Left colon (tissue), 2 donors: ENCODE measurements at regions of chr20 and their contacts with region 1.

Region 1: GRCh38 chr20:44187051-44187762 is at the start of gene JPH2:
- DNase-seq: peak; percentile 43 to 70
- ATAC-seq: peak; percentile 70
- total RNA-seq, gene JPH2: 0.92 to 12.9 TPM

Region 2: DNA sequence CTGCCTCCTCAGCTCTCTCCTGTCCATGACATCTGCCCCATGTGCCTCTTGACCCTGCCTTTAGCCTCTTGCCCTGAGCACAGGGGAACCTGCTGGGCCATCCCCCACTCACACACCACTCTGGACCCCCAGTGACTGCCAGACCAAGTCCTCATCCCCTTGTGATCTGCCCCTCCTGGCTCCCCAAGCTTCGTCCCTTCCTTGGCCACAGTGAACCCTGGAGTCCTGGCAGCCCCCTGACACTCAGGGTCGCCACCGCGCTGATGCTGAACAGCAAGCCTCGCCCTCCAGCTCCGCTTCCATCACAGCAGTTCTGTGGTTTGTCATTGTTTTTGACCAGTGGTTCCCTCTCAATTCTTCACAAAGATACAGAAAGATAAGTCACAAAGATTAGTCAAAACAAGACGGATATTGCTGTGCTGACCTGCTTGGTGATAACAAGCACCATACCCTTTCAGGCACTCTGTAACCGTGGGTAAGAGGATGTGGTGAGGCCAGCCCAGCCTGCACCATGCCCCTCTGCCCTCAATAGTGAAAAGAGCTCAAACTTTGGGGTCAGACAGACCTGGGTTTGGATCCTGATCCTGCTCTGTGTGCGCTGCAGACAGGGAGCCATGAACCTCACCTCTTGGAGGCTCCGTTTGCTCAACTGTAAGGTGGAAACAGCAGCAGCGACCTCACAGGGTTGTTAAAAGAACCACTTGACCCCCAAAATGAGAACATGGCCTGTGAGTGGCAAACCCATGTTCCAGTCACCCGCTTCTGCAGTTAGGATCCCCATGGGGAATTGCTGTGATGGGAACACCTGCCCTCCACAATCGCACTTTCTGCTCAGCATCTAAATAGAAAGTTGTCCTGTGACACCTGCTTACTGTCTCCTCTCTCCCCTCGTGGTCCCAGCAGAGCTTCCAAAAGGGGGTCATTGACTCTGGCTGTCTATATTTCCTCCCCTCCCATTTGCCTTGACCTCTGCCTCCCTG is 158.0 kb before region 1 on chr20:
- intact Hi-C with region 1: no loop called
- DNase-seq: no peak
- ATAC-seq: no peak

Region 3: GRCh38 chr20:44109951-44110361 is 77.3 kb before region 1 on chr20:
- intact Hi-C with region 1: loop called in 1 of 2 experiments (anchors 10 kb)
- DNase-seq: no peak
- ATAC-seq: no peak

Region 4: GRCh38 chr20:44115762-44116644 is 71.2 kb before region 1 on chr20:
- intact Hi-C with region 1: loop called (anchors 2 to 10 kb)
- DNase-seq: no peak
- ATAC-seq: peak; percentile 8